ENCODE measurements at regions of chr1 and their contacts with region 1.

Region 1: GRCh38 chr1:150561974-150562445 is 12.8 kb downstream of the ADAMTSL4 start:
- DNase-seq: peak; percentile 96
- H3K4me3 Mint-ChIP-seq: peak overlapping the region; percentile 89
- H3K27ac Mint-ChIP-seq: peak overlapping the region; percentile 99
- H3K4me1 Mint-ChIP-seq: peaks cover 54% of the 10 kb centered on the region
- H3K27me3 Mint-ChIP-seq: no peaks in the 10 kb centered on the region

Region 2: GRCh38 chr1:150235852-150236613 is 326.0 kb before region 1 on chr1 and contains the start of gene ANP32E:
- CTCF ChIA-PET with region 1: no interaction called
- POLR2A ChIA-PET with region 1: interaction called, 7 read pairs
- intact Hi-C with region 1: loop called (anchors 10 kb)
- DNase-seq: peak; percentile 97
- H3K4me3 Mint-ChIP-seq: no peak within 1 kb of the TSS
- H3K27ac Mint-ChIP-seq: no peak within 1 kb of the TSS
- H3K4me1 Mint-ChIP-seq: peaks cover 17% of the 10 kb centered on the region
- H3K27me3 Mint-ChIP-seq: no peaks in the 10 kb centered on the region
- total RNA-seq, gene ANP32E: 224 to 228 TPM

Region 3: DNA sequence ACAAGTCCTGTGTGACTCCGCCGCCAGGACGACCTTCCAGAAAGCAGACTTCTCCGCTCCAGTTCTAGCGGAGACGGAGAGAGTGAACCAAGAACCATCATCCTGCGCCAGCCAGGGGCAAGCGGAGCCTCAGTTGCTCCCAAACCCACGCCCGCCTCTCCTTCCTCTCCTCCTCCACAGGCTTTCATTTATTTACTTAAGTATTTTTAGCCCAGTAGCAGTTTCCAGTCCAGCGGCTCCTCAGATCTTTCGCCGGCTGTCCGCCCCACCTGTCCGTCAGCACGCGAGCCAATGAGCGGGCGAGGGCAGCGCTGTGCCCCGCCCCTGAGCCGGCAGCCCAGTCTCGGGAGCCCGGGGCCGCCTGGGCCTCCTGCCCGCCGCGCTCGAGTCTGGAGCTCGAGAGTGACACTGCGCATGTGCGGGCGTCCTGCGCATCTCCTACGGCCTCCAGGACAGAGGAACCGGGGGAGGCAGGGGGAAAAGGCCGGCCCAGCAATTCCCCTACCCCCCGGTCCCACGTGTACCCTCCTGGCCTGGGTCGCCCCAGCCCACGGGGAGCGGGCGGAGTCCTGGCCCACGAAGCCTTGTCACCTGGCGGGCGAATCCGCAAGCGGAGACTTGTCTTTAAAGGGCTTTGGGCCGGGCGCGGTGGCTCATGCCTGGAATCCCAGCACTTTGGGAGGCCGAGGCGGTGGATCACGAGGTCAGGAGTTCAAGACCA is 46.5 kb before region 1 on chr1 and contains the start of gene FALEC:
- CTCF ChIA-PET with region 1: interaction called, 21 read pairs
- POLR2A ChIA-PET with region 1: interaction called, 6 read pairs
- intact Hi-C with region 1: no loop called
- DNase-seq: peak; percentile 94
- H3K4me3 Mint-ChIP-seq: peak within 1 kb of the TSS; percentile 83
- H3K27ac Mint-ChIP-seq: peak within 1 kb of the TSS; percentile 33
- H3K4me1 Mint-ChIP-seq: peaks cover 11% of the 10 kb centered on the region
- H3K27me3 Mint-ChIP-seq: no peaks in the 10 kb centered on the region
- total RNA-seq, gene FALEC: not detected

Region 4: GRCh38 chr1:150613061-150613920 is 51.3 kb after region 1 on chr1:
- CTCF ChIA-PET with region 1: interaction called, 243 read pairs
- POLR2A ChIA-PET with region 1: interaction called, 147 read pairs
- intact Hi-C with region 1: loop called (anchors 1 kb)
- DNase-seq: peak; percentile 75
- H3K4me3 Mint-ChIP-seq: peak overlapping the region; percentile 62
- H3K27ac Mint-ChIP-seq: peak overlapping the region; percentile 97
- H3K4me1 Mint-ChIP-seq: peaks cover 66% of the 10 kb centered on the region
- H3K27me3 Mint-ChIP-seq: no peaks in the 10 kb centered on the region

Region 5: DNA sequence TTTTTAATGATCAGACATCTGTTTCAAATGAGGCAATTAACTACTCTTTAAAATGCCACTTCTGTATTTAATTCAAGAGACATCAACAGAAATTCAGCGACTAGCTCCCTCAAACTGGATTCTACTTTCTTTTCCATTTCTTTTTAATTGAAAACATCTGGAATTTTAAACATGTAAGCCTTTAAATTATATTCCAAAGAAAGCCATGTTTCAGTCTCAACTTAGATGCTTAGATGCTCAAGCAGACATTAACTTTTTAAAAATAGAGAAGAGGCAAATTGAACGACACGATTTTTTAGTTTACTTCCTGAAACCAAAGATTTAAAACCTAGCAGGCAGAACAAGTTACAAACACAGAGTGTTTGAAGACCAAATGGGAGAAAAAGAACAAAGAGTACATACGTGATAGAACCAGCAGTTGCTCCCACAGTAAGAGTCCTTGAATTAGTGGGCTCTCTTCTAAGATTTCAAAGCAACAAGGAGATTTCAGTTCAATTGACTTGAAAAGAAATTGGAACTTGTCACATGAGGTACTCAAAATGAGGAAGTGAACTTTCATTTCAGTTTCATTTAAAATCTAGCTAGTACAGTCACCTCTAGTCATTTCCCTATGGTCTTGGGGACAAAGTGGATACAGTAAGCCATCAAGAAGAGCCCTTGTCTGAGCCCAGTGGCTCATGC is 203.4 kb after region 1 on chr1 and contains the start of gene CTSS:
- CTCF ChIA-PET with region 1: interaction called, 3 read pairs
- POLR2A ChIA-PET with region 1: no interaction called
- intact Hi-C with region 1: loop called (anchors 2 kb)
- DNase-seq: no peak
- H3K4me3 Mint-ChIP-seq: peak within 1 kb of the TSS; percentile 88
- H3K27ac Mint-ChIP-seq: peak within 1 kb of the TSS; percentile 88
- H3K4me1 Mint-ChIP-seq: peaks cover 45% of the 10 kb centered on the region
- H3K27me3 Mint-ChIP-seq: no peaks in the 10 kb centered on the region
- total RNA-seq, gene CTSS: 39.4 to 45.5 TPM

Region 6: GRCh38 chr1:151008190-151008860 is 446.3 kb after region 1 on chr1 and contains the start of gene PRUNE1:
- CTCF ChIA-PET with region 1: no interaction called
- POLR2A ChIA-PET with region 1: no interaction called
- intact Hi-C with region 1: loop called (anchors 5 kb)
- DNase-seq: peak; percentile 97
- H3K4me3 Mint-ChIP-seq: peak within 1 kb of the TSS; percentile 99
- H3K27ac Mint-ChIP-seq: peak within 1 kb of the TSS; percentile 97
- H3K4me1 Mint-ChIP-seq: peaks cover 64% of the 10 kb centered on the region
- H3K27me3 Mint-ChIP-seq: no peaks in the 10 kb centered on the region
- total RNA-seq, gene PRUNE1: 12.5 to 17.5 TPM